A549 (cell line): ENCODE measurements at regions of chr3 and their contacts with region 1.

Region 1: GRCh38 chr3:124761250-124761796 is 31.1 kb downstream of the UMPS start:
- DNase-seq: peak; percentile 68 to 91
- ATAC-seq: peak; percentile 73
- H3K4me3 ChIP-seq: no peak overlapping the region
- H3K27ac ChIP-seq: peak overlapping the region; percentile 60 to 75
- H3K4me1 ChIP-seq: peaks cover 28% of the 10 kb centered on the region
- CTCF ChIP-seq: peak; percentile 95
- EP300 ChIP-seq: no peak
- POLR2A ChIP-seq: no peak
- RAD21 ChIP-seq: peak; percentile 97 to 98

Region 2: GRCh38 chr3:124559881-124560574 is 201.3 kb before region 1 on chr3:
- CTCF ChIA-PET with region 1: interaction called, 23 read pairs
- POLR2A ChIA-PET with region 1: no interaction called
- DNase-seq: peak; percentile 83 to 85
- ATAC-seq: peak; percentile 82 to 89
- H3K4me3 ChIP-seq: no peak overlapping the region
- H3K27ac ChIP-seq: peak overlapping the region; percentile 55 to 75; a peak in 5 of 6 replicates
- H3K4me1 ChIP-seq: peaks cover 29% of the 10 kb centered on the region
- CTCF ChIP-seq: peak; percentile 87
- EP300 ChIP-seq: no peak
- POLR2A ChIP-seq: no peak
- RAD21 ChIP-seq: peak; percentile 84 to 92

Region 3: GRCh38 chr3:124780761-124781475 is 19.6 kb after region 1 on chr3:
- CTCF ChIA-PET with region 1: interaction called, 42 read pairs
- POLR2A ChIA-PET with region 1: no interaction called
- DNase-seq: no peak
- ATAC-seq: no peak; a peak in 1 of 6 replicates
- H3K4me3 ChIP-seq: no peak overlapping the region
- H3K27ac ChIP-seq: peak overlapping the region in 1 of 2 experiments; percentile 37; a peak in 3 of 6 replicates
- H3K4me1 ChIP-seq: peaks cover 42% of the 10 kb centered on the region
- CTCF ChIP-seq: no peak
- EP300 ChIP-seq: no peak
- POLR2A ChIP-seq: no peak
- RAD21 ChIP-seq: no peak

Region 4: DNA sequence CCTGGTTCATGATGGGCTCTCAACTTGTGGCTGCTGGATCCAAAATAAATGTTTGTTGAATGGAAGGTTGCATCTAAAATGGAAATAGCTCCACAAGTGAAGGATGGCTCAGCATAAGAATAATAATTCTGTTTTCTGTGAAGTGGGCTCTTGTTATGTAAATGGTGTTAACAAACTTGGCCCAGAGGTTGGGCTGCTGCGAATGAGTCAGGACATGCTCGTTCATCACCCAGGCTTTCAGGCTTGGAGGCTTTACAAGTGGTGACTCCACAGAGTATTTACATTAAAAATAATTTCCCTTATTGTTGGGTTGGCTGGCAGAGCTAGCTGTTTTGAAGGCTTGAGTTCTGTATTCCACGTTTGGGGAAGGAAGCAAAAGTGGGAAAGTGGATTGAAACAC is 65.4 kb after region 1 on chr3:
- CTCF ChIA-PET with region 1: interaction called, 13 read pairs
- POLR2A ChIA-PET with region 1: no interaction called
- DNase-seq: no peak
- ATAC-seq: peak; percentile 51 to 62; a peak in 4 of 6 replicates
- H3K4me3 ChIP-seq: no peak overlapping the region
- H3K27ac ChIP-seq: peak overlapping the region; percentile 52 to 81
- H3K4me1 ChIP-seq: peaks cover 54% of the 10 kb centered on the region
- CTCF ChIP-seq: no peak
- EP300 ChIP-seq: no peak
- POLR2A ChIP-seq: no peak
- RAD21 ChIP-seq: no peak

Region 5: GRCh38 chr3:124916837-124917409 is 155.6 kb after region 1 on chr3:
- CTCF ChIA-PET with region 1: interaction called, 12 read pairs
- POLR2A ChIA-PET with region 1: no interaction called
- DNase-seq: no peak
- ATAC-seq: no peak
- H3K4me3 ChIP-seq: no peak overlapping the region
- H3K27ac ChIP-seq: no peak overlapping the region
- H3K4me1 ChIP-seq: no peaks in the 10 kb centered on the region
- CTCF ChIP-seq: no peak
- EP300 ChIP-seq: no peak
- POLR2A ChIP-seq: no peak
- RAD21 ChIP-seq: no peak

Region 6: DNA sequence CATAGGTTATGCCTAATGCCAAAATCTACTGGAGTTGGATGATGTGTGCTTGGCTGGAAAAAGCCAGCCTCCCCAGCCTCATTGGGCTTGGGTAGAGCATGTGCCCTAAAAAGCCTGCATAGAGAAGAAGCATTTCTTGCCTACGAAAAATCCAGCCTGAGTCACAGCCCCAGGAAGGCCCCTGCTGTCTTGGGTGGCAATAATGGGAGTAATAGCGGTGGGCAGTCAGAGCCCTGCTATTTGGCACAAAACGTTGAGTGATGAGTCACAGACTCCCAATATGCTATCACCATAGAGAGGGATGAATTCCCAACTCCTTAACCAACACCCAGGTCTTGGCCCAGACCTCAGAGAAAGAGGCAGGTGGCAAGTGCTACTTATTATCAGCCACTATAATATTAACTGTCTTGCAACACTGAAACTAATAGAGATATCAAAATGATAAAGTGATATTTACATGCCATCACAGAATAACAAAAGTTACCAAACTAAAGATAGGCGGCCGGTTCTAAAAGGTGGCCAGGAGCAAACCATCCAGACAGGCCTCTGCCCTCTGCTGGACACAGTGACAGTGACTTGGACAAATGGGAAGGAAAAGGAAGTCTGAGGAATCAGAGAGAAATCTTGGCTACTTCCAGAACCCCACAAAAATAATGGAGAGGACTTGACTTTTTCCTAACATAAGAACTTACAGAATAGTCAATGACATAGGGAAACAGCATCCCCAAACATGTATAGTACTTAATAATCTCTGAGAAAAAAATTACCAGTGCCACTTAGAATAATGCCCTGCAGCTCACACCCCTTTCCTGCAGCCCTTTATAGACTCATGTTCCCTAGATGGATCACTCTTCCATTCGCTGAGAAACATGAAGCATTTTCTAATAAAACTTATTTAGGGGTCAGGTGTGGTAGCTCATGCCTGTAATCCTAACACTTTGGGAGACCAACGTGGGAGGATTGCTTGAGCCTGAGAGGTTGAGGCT is 225.1 kb after region 1 on chr3:
- CTCF ChIA-PET with region 1: interaction called, 13 read pairs
- POLR2A ChIA-PET with region 1: no interaction called
- DNase-seq: peak; percentile 72 to 78
- ATAC-seq: peak; percentile 95 to 96
- H3K4me3 ChIP-seq: no peak overlapping the region
- H3K27ac ChIP-seq: peak overlapping the region; percentile 77 to 93
- H3K4me1 ChIP-seq: peaks cover 27% of the 10 kb centered on the region
- CTCF ChIP-seq: peak; percentile 66
- EP300 ChIP-seq: no peak
- POLR2A ChIP-seq: no peak
- RAD21 ChIP-seq: peak; percentile 62 to 66